T-cell (primary cell): ENCODE measurements at regions of chr15 and their contacts with region 1.

Region 1: GRCh38 chr15:59528965-59529402 is 82.6 kb upstream of the GCNT3 start:
- DNase-seq: peak; percentile 27 to 79 (median 56)
- ATAC-seq: peak; percentile 72 to 87 (median 76)
- H3K4me3 ChIP-seq: no peak overlapping the region
- H3K4me3 Mint-ChIP-seq: no peak overlapping the region
- H3K27ac ChIP-seq: no peak overlapping the region
- H3K27ac Mint-ChIP-seq: peak overlapping the region in 1 of 2 donors; percentile 1
- H3K4me1 ChIP-seq: peaks cover 3 to 7% of the 10 kb centered on the region in 2 experiments
- H3K4me1 Mint-ChIP-seq: peaks cover 17 to 21% (median 18%) of the 10 kb centered on the region in 3 donors
- H3K27me3 ChIP-seq: peaks cover 0 to 10% of the 10 kb centered on the region in 2 experiments
- H3K27me3 Mint-ChIP-seq: peaks cover 6% of the 10 kb centered on the region in 2 donors

Region 2: GRCh38 chr15:58227706-58228543 is 1301.1 kb before region 1 on chr15:
- CTCF ChIA-PET with region 1: interaction called in 1 of 2 experiments, 11 read pairs
- POLR2A ChIA-PET with region 1: no interaction called
- DNase-seq: peak in 34 of 35 experiments; percentile 28 to 80 (median 56)
- ATAC-seq: peak in 2 of 4 experiments; percentile 45 to 46
- H3K4me3 ChIP-seq: no peak overlapping the region
- H3K4me3 Mint-ChIP-seq: no peak overlapping the region
- H3K27ac ChIP-seq: no peak overlapping the region
- H3K27ac Mint-ChIP-seq: no peak overlapping the region
- H3K4me1 ChIP-seq: peaks cover 3 to 13% of the 10 kb centered on the region in 2 experiments
- H3K4me1 Mint-ChIP-seq: peaks cover 12 to 19% (median 15%) of the 10 kb centered on the region in 3 donors
- H3K27me3 ChIP-seq: peaks cover 0 to 11% of the 10 kb centered on the region in 2 experiments
- H3K27me3 Mint-ChIP-seq: peaks cover 0 to 7% of the 10 kb centered on the region in 2 donors

Region 3: DNA sequence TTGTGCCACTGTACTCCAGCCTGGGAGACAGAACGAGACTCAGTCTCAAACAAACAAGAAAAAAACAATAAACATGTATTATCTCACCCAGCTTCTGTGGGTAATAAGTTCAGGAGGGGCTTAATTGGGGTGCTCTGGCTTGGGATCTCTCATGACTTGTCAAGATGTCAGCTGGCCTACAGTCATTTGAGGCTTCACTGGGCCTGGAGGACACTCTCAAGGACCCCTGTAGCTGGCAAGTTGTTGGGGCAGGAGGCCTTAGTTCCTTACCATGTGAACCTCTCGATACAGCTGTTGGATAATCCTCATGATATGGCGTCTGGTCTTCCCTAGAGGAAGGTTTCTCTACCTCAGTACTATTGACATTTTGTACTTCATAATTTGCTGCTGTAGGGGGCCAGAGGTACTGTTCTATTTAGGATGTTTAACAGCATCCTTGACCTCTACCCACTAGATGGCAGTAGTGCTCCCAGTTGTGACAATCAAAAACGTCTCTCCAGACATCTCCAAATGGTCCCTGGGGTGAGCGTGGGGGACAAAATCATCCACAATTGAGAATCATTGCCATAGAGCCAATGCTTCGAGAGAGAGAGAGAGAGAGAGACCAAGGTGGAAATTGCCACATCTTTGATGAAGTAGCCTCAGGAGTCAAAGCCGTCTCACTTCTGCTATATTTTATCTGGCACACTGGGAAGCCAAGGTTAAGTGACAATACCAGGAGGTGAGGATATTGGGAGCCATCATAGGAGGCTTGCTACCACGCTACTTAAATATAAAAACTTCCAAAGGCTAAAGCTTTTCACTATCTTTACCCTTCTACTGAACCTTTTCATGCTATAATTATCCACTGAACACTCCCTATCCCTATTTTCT is 571.6 kb before region 1 on chr15:
- CTCF ChIA-PET with region 1: interaction called, 4 to 17 read pairs
- POLR2A ChIA-PET with region 1: no interaction called
- DNase-seq: peak in 34 of 35 experiments; percentile 16 to 86 (median 44)
- ATAC-seq: peak; percentile 84 to 91 (median 90)
- H3K4me3 ChIP-seq: no peak overlapping the region
- H3K4me3 Mint-ChIP-seq: no peak overlapping the region
- H3K27ac ChIP-seq: no peak overlapping the region
- H3K27ac Mint-ChIP-seq: peak overlapping the region in 1 of 2 donors; percentile 18
- H3K4me1 ChIP-seq: no peaks in the 10 kb centered on the region
- H3K4me1 Mint-ChIP-seq: peaks cover 6 to 11% (median 10%) of the 10 kb centered on the region in 3 donors
- H3K27me3 ChIP-seq: no peaks in the 10 kb centered on the region
- H3K27me3 Mint-ChIP-seq: no peaks in the 10 kb centered on the region

Region 4: DNA sequence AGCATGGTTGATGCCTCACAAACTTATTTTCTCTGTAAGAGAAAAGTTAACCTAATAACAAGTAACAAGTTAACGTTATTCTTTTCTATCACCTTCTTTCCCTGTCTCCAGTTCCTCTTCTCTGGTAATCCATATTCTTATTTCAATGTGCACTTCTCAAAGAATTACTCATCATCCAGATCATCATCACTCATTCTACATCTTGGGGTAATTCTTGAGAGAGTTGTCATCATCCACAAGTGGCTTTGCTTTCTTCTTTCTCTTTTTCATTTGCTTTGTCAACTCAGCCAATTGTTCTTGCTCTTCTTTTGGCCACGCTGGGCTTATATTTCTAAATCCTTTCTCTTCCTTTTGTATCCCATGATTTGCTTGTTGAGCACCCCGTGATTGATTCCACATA is 562.3 kb before region 1 on chr15:
- CTCF ChIA-PET with region 1: interaction called, 6 to 14 read pairs
- POLR2A ChIA-PET with region 1: no interaction called
- DNase-seq: no peak
- ATAC-seq: no peak
- H3K4me3 ChIP-seq: no peak overlapping the region
- H3K4me3 Mint-ChIP-seq: no peak overlapping the region
- H3K27ac ChIP-seq: no peak overlapping the region
- H3K27ac Mint-ChIP-seq: no peak overlapping the region
- H3K4me1 ChIP-seq: no peaks in the 10 kb centered on the region
- H3K4me1 Mint-ChIP-seq: no peaks in the 10 kb centered on the region
- H3K27me3 ChIP-seq: no peaks in the 10 kb centered on the region
- H3K27me3 Mint-ChIP-seq: no peaks in the 10 kb centered on the region

Region 5: DNA sequence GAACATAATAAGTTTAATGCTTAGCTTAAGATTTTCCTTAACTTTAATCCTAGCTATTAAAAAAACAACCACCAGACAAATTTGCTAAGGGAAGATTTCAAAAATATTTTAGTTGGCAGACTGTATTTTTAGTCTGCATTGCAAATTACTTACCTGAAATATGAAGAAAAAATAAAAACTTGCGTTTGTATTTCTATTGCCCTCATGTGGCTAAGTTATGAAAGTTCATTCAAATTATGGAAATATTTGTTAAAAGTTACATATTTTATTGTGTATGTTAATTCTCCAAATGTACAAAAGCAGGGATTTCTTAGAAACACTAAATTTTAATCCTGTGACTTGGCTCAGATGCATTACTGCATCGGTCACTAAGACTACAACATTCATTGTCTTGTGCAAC is 113.4 kb after region 1 on chr15:
- CTCF ChIA-PET with region 1: no interaction called
- POLR2A ChIA-PET with region 1: no interaction called
- DNase-seq: no peak
- ATAC-seq: no peak
- H3K4me3 ChIP-seq: no peak overlapping the region
- H3K4me3 Mint-ChIP-seq: no peak overlapping the region
- H3K27ac ChIP-seq: no peak overlapping the region
- H3K27ac Mint-ChIP-seq: no peak overlapping the region
- H3K4me1 ChIP-seq: no peaks in the 10 kb centered on the region
- H3K4me1 Mint-ChIP-seq: no peaks in the 10 kb centered on the region
- H3K27me3 ChIP-seq: no peaks in the 10 kb centered on the region
- H3K27me3 Mint-ChIP-seq: no peaks in the 10 kb centered on the region